HepG2 (cell line): ENCODE measurements at regions of chrX and their contacts with region 1.

Region 1: DNA sequence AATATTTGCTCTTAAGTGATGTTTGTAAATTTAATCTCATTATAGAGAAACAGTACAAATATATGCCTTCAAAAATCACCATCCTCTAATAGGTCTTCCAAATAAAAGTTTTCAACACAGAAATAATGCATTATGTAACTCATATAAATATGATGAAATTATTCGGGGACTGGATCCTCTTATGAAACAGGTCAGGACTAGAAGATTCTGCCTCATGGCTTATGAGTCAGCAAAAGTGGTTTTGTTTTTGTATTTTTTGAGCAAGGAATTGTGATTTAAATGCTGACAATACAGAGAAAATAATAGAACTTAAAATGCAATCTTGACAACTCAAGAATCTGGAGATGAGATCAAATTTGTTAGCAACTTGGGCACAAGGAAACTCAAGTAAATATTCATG is 179.7 kb upstream of the NDP start:
- DNase-seq: no peak
- ATAC-seq: no peak
- H3K4me3 ChIP-seq: no peak overlapping the region
- H3K27ac ChIP-seq: no peak overlapping the region
- H3K4me1 ChIP-seq: no peaks in the 10 kb centered on the region
- H3K27me3 ChIP-seq: no peaks in the 10 kb centered on the region; a peak in 1 of 5 replicates
- CTCF ChIP-seq: no peak
- EP300 ChIP-seq: no peak
- POLR2A ChIP-seq: no peak
- RAD21 ChIP-seq: no peak

Region 2: GRCh38 chrX:44042720-44043119 is 110.1 kb before region 1 on chrX:
- CTCF ChIA-PET with region 1: no interaction called
- POLR2A ChIA-PET with region 1: no interaction called
- in situ Hi-C with region 1: loop called (anchors 10 kb)
- intact Hi-C with region 1: no loop called
- DNase-seq: no peak
- ATAC-seq: no peak
- H3K4me3 ChIP-seq: no peak overlapping the region
- H3K27ac ChIP-seq: no peak overlapping the region
- H3K4me1 ChIP-seq: no peaks in the 10 kb centered on the region
- H3K27me3 ChIP-seq: no peaks in the 10 kb centered on the region
- CTCF ChIP-seq: no peak
- EP300 ChIP-seq: no peak
- POLR2A ChIP-seq: no peak
- RAD21 ChIP-seq: no peak

Region 3: GRCh38 chrX:44105228-44105914 is 47.5 kb before region 1 on chrX:
- CTCF ChIA-PET with region 1: no interaction called
- POLR2A ChIA-PET with region 1: no interaction called
- in situ Hi-C with region 1: no loop called
- intact Hi-C with region 1: no loop called
- DNase-seq: no peak
- ATAC-seq: no peak
- H3K4me3 ChIP-seq: no peak overlapping the region
- H3K27ac ChIP-seq: no peak overlapping the region
- H3K4me1 ChIP-seq: no peaks in the 10 kb centered on the region
- H3K27me3 ChIP-seq: no peaks in the 10 kb centered on the region
- CTCF ChIP-seq: 0 out of 2 replicates have a peak, but pooled peaks have one; percentile 9
- EP300 ChIP-seq: no peak
- POLR2A ChIP-seq: no peak
- RAD21 ChIP-seq: no peak

Region 4: DNA sequence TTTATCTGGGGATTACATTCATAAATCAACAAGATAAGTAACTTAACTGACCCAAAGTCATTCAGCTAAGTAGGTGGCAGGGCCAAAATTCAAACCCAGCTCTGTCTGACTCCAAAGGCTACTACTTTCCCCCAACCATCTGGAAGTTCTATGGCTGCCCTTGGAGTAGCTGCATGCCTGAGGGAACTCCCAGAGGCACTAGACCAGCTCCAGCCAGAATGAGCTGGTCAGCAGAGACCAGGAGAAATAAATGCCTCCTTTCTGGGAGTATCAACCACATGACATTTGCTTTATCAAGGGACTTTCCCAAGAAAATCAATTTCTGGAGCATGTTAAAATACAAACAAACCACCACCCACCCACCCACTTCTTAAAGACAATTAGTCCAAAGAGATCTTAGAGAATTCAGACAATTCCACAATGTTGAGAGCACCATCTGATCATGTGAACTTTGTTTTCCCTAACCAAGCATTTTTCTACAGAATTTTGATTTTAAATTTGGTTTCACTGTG is 10.2 kb after region 1 on chrX:
- CTCF ChIA-PET with region 1: no interaction called
- POLR2A ChIA-PET with region 1: no interaction called
- in situ Hi-C with region 1: no loop called
- intact Hi-C with region 1: no loop called
- DNase-seq: no peak
- ATAC-seq: no peak
- H3K4me3 ChIP-seq: no peak overlapping the region
- H3K27ac ChIP-seq: no peak overlapping the region
- H3K4me1 ChIP-seq: no peaks in the 10 kb centered on the region
- H3K27me3 ChIP-seq: no peaks in the 10 kb centered on the region
- CTCF ChIP-seq: no peak
- EP300 ChIP-seq: no peak
- POLR2A ChIP-seq: no peak
- RAD21 ChIP-seq: no peak